Endothelial cell of umbilical vein (primary cell): ENCODE measurements at regions of chr6 and their contacts with region 1.

Region 1: GRCh38 chr6:28981833-28982475 is 23.2 kb downstream of the ZNF311 start:
- DNase-seq: peak; percentile 94
- H3K4me3 ChIP-seq: peak overlapping the region; percentile 44 to 82 (median 60)
- H3K27ac ChIP-seq: peak overlapping the region; percentile 42
- H3K4me1 ChIP-seq: peaks cover 25% of the 10 kb centered on the region
- H3K27me3 ChIP-seq: no peaks in the 10 kb centered on the region
- CTCF ChIP-seq: no peak
- POLR2A ChIP-seq: no peak

Region 2: DNA sequence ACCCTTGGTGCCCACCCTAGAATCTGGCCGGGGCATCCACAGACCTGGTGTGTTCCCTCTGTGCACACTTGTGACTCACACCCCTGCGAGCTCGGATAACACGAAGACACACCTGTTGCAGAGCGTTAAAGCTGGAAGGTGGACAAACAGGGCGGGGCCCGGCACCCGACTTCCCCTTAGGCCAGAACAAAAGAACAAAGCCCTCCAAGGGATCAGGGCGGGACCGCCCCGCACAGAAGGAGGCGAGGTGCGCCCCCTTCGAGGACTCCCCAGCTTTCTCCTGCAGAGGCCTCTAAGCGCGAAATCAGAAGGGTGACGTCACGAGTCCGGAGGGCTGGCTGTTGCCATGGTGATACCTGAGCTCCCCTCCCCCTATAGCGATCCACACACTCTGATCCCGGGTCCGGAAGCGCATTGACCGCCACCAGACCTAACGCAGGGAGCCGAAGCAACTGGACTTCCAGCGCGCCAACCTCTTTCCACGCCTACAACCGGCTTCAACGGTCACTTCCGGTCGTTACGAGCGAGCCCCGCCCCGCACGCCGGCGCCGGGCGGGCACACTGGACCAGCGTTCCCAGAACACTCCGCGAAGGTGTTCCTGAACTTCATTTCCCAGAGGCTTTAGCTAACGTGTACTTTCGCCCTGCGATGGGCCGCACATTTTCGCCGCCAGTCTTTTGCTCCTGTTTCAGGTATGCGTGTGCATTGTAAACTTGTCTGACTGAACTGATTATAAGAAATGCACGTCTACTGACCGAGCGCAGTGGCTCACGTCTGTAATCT is 1509.1 kb before region 1 on chr6 and contains the start of gene ZNF184:
- CTCF ChIA-PET with region 1: no interaction called
- POLR2A ChIA-PET with region 1: no interaction called
- dilution Hi-C with region 1: no loop called
- intact Hi-C with region 1: loop called (anchors 10 kb)
- DNase-seq: peak; percentile 98
- H3K4me3 ChIP-seq: peak within 1 kb of the TSS; percentile 68 to 94 (median 82)
- H3K27ac ChIP-seq: peak within 1 kb of the TSS; percentile 74
- H3K4me1 ChIP-seq: peaks cover 9% of the 10 kb centered on the region
- H3K27me3 ChIP-seq: peaks cover 9 to 14% of the 10 kb centered on the region in 2 experiments
- CTCF ChIP-seq: no peak
- POLR2A ChIP-seq: peak; percentile 84
- total RNA-seq, gene ZNF184: 5.4 and 6.5 TPM in 2 replicates

Region 3: GRCh38 chr6:28648035-28648877 is 333.7 kb before region 1 on chr6:
- CTCF ChIA-PET with region 1: interaction called, 3 read pairs
- POLR2A ChIA-PET with region 1: interaction called, 11 read pairs
- dilution Hi-C with region 1: no loop called
- intact Hi-C with region 1: loop called (anchors 10 kb)
- DNase-seq: peak; percentile 86
- H3K4me3 ChIP-seq: peak overlapping the region; percentile 47 to 97 (median 70)
- H3K27ac ChIP-seq: peak overlapping the region; percentile 14
- H3K4me1 ChIP-seq: peaks cover 3% of the 10 kb centered on the region
- H3K27me3 ChIP-seq: peaks cover 7 to 20% of the 10 kb centered on the region in 2 experiments
- CTCF ChIP-seq: no peak
- POLR2A ChIP-seq: no peak

Region 4: GRCh38 chr6:28824793-28825731 is 156.9 kb before region 1 on chr6:
- CTCF ChIA-PET with region 1: no interaction called
- POLR2A ChIA-PET with region 1: no interaction called
- dilution Hi-C with region 1: no loop called
- intact Hi-C with region 1: no loop called
- DNase-seq: no peak
- H3K4me3 ChIP-seq: no peak overlapping the region
- H3K27ac ChIP-seq: no peak overlapping the region
- H3K4me1 ChIP-seq: no peaks in the 10 kb centered on the region
- H3K27me3 ChIP-seq: peaks cover 29 to 44% of the 10 kb centered on the region in 2 experiments
- CTCF ChIP-seq: no peak
- POLR2A ChIP-seq: no peak

Region 5: DNA sequence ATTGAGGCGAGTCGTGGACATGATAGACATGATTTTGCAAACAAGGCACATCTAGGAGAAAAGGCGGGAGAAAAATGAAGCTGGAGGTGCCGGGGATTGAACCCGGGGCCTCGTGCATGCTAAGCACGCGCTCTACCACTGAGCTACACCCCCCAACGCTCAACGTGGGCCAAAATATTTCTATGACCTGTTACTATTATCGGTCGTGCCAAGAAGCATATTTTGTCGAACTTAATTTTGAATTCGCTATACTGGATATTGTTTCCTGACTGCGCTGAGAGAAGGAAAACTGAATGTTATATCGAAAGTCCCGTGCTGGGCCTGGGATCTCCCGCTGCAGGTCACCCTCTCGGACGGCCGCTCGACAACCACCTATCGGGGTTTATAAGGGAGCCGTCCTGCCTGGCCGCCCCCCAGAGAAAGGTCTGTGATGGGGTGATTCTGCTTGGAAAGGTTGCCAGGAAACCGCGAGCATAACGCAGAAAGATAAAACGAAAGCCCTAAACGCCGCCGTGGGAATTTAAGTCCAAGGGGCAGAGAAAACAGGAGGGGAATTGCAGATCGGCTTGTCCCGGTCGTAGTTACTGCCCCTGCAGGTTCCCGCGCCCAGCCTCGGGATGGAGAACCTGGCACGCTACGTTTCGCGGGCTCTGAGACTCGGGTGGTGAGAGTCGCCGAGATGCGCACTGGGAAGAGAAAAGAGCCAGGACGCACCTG is 118.2 kb before region 1 on chr6:
- CTCF ChIA-PET with region 1: interaction called, 3 read pairs
- POLR2A ChIA-PET with region 1: no interaction called
- dilution Hi-C with region 1: no loop called
- intact Hi-C with region 1: loop called (anchors 1 kb)
- DNase-seq: peak; percentile 91
- H3K4me3 ChIP-seq: peak overlapping the region; percentile 64 to 91 (median 83)
- H3K27ac ChIP-seq: peak overlapping the region; percentile 9
- H3K4me1 ChIP-seq: peaks cover 16% of the 10 kb centered on the region
- H3K27me3 ChIP-seq: peaks cover 5% of the 10 kb centered on the region in 2 experiments
- CTCF ChIP-seq: no peak
- POLR2A ChIP-seq: no peak

Region 6: DNA sequence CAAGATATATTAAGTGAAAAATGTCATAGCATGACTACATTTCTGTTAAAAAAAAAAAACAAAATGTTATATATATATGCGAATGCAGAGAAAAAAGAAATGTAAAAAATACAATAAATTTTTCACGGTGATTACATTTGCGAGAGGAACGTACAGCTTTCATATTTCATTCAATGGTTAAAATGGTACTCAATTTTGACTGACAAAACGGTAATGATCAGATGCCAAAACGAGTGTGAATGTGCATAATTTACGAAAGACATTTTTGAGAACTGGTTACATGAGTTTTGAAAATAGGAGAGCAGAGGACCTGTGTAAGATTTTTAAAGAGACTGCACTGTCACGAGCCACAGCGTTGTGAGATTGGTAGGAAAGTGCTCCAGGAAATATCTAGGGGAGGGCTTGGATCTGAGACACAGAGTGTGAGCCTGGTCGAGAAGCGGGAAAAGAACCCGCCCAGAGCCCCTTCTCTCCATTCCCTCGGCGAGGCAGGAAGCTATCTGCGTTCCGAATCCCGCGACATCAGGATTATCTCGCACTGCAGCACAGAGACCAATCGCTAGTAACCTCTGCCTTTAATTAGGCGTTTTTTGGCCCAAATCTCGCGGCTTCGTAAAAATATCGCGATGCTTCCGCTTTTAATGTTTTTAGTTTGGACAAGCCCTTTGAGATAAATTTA is 86.7 kb before region 1 on chr6:
- CTCF ChIA-PET with region 1: interaction called, 5 read pairs
- POLR2A ChIA-PET with region 1: no interaction called
- dilution Hi-C with region 1: no loop called
- intact Hi-C with region 1: loop called (anchors 1 kb)
- DNase-seq: peak; percentile 98
- H3K4me3 ChIP-seq: peak overlapping the region; percentile 22 to 82 (median 68)
- H3K27ac ChIP-seq: peak overlapping the region; percentile 88
- H3K4me1 ChIP-seq: peaks cover 6% of the 10 kb centered on the region
- H3K27me3 ChIP-seq: no peaks in the 10 kb centered on the region
- CTCF ChIP-seq: no peak
- POLR2A ChIP-seq: peak; percentile 92

Region 7: GRCh38 chr6:28953039-28953584 is 28.8 kb before region 1 on chr6:
- CTCF ChIA-PET with region 1: interaction called, 6 read pairs
- POLR2A ChIA-PET with region 1: interaction called, 3 read pairs
- dilution Hi-C with region 1: no loop called
- intact Hi-C with region 1: loop called (anchors 1 kb)
- DNase-seq: peak; percentile 58
- H3K4me3 ChIP-seq: peak overlapping the region; percentile 24 to 87 (median 83)
- H3K27ac ChIP-seq: no peak overlapping the region
- H3K4me1 ChIP-seq: peaks cover 12% of the 10 kb centered on the region
- H3K27me3 ChIP-seq: peaks cover 0 to 16% of the 10 kb centered on the region in 2 experiments
- CTCF ChIP-seq: no peak
- POLR2A ChIP-seq: no peak